Dendritic cell treated with granulocyte-macrophage colony-stimulating factor and Interleukin-4, amounts not matched to agents 40 ng/mL and 50 ng/mL, for 4 days (primary cell): ENCODE measurements at regions of chr7 and their contacts with region 1.

Region 1: DNA sequence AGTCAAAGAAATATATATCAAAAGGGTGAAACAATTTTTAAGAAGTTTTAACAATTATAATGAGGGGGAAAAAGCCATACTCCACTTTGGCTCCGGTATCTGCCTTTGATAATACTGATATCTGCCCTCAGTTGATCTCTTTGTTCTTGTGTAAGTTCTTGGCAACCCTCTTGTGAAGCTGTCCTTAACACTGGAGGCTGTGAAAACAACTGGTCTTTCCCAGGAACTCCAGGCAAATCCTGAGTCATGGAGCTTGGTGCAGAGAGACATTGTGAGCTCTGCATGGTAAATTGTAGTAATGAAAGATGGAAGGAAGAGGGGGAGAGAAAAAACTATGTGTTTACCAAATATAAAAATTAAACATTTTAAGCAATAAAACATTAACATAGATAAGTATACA is 11.9 kb upstream of the ERVW-1 start:
- H3K4me3 Mint-ChIP-seq: no peak overlapping the region
- H3K27ac Mint-ChIP-seq: no peak overlapping the region
- H3K4me1 Mint-ChIP-seq: no peaks in the 10 kb centered on the region
- H3K27me3 Mint-ChIP-seq: no peaks in the 10 kb centered on the region

Region 2: DNA sequence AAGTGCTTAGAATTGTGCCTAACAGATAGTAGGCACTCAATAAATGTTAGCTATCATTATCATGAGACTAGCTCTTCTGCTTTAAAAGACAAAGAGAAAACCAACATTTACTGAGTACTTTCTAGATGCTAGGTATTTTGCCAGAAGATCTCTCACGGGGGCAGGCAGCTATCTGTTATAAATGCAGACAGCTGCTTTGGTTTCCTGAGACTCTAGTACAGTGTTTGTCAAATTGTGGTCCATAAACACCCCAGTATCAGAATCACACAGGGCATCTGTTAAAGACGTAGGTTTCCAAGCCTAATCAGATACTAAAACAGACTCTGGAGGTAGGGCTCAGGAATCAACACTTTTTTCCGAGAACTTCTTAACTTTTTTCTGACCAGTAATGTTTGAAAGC is 86.7 kb after region 1 on chr7:
- intact Hi-C with region 1: loop called (anchors 10 kb)
- H3K4me3 Mint-ChIP-seq: no peak overlapping the region
- H3K27ac Mint-ChIP-seq: no peak overlapping the region
- H3K4me1 Mint-ChIP-seq: no peaks in the 10 kb centered on the region
- H3K27me3 Mint-ChIP-seq: no peaks in the 10 kb centered on the region